ENCODE measurements at regions of chr17 and their contacts with region 1.

Region 1: GRCh38 chr17:36869856-36870719 is 67.2 kb upstream of the LHX1 start:
- DNase-seq: no peak
- H3K4me3 ChIP-seq: no peak overlapping the region
- CTCF ChIP-seq: no peak

Region 2: GRCh38 chr17:36824678-36825091 is 45.4 kb before region 1 on chr17:
- in situ Hi-C with region 1: loop called (anchors 5 kb)
- DNase-seq: no peak
- H3K4me3 ChIP-seq: no peak overlapping the region
- CTCF ChIP-seq: no peak

Region 3: DNA sequence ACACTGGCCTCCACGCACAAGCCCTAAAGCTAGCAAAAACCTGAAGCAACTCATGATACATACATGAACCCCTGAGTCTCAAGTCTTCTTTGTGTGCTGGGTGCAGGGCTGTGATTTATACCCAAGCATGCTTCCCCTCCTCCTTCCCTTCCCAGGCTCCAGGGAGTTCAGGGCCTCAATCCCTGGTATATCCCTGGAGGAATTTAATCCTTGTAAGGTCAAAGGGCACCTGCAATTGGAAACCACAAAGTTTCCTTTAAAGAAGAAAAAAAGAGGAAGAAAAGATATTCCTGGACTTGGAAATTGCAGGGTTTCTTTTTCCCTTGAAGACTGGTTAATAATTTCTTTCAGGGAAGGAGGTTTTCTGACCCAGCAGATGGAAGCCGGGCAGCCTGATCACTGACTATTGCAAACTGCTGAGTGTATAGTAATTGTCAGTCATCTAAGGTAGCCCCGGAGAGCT is 260.9 kb after region 1 on chr17:
- in situ Hi-C with region 1: no loop called
- DNase-seq: no peak
- H3K4me3 ChIP-seq: no peak overlapping the region
- CTCF ChIP-seq: no peak